ENCODE measurements at regions of chr17 and their contacts with region 1.

Region 1: DNA sequence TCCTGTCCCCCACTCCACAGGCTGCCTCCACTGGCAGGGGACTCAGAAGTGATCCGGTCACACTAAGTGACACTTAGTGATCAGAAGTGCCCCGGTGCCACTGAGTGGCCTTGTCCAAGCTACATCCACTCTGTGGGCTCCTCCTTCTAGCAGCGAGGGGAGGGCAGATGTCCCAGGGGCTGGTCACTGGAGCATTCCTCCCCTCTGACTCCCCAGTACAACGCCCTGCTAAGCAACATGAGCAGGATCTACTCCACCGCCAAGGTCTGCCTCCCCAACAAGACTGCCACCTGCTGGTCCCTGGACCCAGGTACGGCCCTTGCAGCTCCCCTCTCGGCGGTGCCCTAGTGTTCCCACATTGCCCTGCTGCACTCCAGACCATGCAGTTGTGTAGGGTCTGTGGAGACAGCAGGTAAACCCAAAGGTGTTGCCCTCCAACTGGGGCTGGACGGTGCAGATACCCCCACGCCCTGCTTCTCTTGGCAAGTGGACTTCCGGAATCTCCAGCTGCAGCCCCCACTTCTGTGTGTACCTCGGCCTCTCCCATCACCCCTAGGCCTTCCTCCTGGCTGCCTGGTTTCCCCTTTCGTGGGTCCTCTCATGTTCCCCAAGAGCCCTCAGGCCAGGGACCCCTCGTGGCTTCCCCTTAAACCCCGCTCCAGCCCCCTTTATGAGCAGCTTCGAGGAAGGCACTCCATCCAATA is 2.1 kb downstream of the ACE start:
- DNase-seq: peak; percentile 47 to 56
- ATAC-seq: peak; percentile 63 to 64
- H3K4me3 ChIP-seq: no peak overlapping the region
- H3K27ac ChIP-seq: no peak overlapping the region
- H3K4me1 ChIP-seq: peaks cover 5 to 15% of the 10 kb centered on the region in 2 donors
- H3K27me3 ChIP-seq: peaks cover 11 to 32% (median 18%) of the 10 kb centered on the region in 3 donors
- CTCF ChIP-seq: peak; percentile 39 to 67 (median 64)
- POLR2A ChIP-seq: no peak

Region 2: GRCh38 chr17:63279498-63280230 is 199.3 kb before region 1 on chr17:
- in situ Hi-C with region 1: no loop called
- intact Hi-C with region 1: no loop called
- DNase-seq: no peak
- ATAC-seq: no peak
- H3K4me3 ChIP-seq: no peak overlapping the region
- H3K27ac ChIP-seq: no peak overlapping the region
- H3K4me1 ChIP-seq: no peaks in the 10 kb centered on the region
- H3K27me3 ChIP-seq: no peaks in the 10 kb centered on the region
- CTCF ChIP-seq: no peak
- POLR2A ChIP-seq: no peak

Region 3: DNA sequence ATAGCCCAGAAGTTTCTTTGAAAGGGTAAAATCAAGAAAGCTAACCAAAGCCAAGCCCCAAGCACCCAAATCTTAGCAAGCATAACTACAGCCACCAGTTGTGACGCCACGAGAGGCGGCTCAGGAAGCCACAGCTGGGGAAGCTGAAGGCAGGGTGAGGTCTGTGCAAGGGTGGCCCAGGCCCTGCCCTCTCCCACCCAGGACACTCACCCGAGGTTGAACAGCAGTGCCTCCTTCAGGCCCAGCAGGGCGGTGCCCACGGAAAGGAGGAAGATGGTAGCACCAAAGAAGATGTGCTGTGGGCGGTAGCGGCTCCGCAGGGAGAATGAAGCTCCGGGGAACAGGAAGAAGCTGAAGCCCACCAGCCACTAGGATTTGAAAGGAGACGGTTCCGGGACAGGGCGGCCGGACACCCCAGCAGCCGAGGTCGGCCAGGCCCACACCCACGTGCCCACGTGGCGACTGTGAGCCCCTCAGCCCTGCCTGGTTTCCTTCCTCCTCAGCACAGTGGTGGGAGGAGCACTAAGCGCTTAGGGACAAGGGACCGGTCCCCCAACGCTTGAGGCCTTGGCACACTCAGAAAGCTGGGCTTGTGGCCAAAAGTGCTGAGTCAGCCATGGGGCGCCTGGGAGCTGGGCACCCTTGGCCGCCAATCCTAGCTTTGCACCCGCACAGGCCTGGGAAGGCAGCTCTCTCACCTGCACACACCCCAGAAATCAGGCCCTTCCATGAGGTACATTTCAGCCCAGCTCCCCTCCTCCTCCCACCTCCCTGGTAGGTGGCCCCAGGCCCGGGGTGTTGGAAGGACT is 43.9 kb before region 1 on chr17:
- in situ Hi-C with region 1: loop called in 1 of 4 experiments (anchors 10 kb)
- intact Hi-C with region 1: loop called (anchors 5 kb)
- DNase-seq: peak in 1 of 2 donors; percentile 41
- ATAC-seq: peak in 1 of 2 donors; percentile 47
- H3K4me3 ChIP-seq: no peak overlapping the region
- H3K27ac ChIP-seq: peak overlapping the region; percentile 51 to 66 (median 58)
- H3K4me1 ChIP-seq: peaks cover 17 to 21% of the 10 kb centered on the region in 2 donors
- H3K27me3 ChIP-seq: no peaks in the 10 kb centered on the region
- CTCF ChIP-seq: no peak
- POLR2A ChIP-seq: no peak